Activated CD8-positive, alpha-beta T cell treated with anti-CD3 and anti-CD28 coated beads for 36 hours (primary cell): ENCODE measurements at regions of chr1 and their contacts with region 1.

Region 1: GRCh38 chr1:101506541-101507164 is 269.8 kb downstream of the S1PR1 start:
- DNase-seq: peak; percentile 56
- ATAC-seq: peak; percentile 73
- H3K4me3 Mint-ChIP-seq: no peak overlapping the region
- H3K27ac Mint-ChIP-seq: no peak overlapping the region
- H3K4me1 Mint-ChIP-seq: no peaks in the 10 kb centered on the region
- H3K27me3 Mint-ChIP-seq: no peaks in the 10 kb centered on the region
- CTCF ChIP-seq: peak; percentile 76

Region 2: DNA sequence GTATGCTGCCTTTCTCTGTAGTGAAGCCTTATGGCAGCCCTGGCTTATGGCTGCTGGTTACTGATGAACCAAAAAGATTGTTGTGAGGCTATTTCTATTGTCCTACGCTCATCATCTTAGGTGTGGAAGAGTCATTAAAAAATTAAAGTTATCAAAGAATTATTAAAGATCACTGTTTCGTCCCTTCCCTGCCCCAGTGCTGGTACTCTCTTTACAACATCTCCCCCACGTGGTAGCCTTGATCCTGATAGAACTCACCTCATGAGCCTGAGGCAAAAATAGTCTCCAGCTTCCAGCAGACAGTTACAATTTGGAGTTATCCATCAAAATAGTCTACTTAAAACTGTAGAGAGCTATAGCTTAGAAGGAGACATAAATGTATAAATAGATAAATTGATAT is 68.3 kb before region 1 on chr1:
- CTCF ChIA-PET with region 1: no interaction called
- POLR2A ChIA-PET with region 1: no interaction called
- intact Hi-C with region 1: no loop called
- DNase-seq: no peak
- ATAC-seq: no peak
- H3K4me3 Mint-ChIP-seq: no peak overlapping the region
- H3K27ac Mint-ChIP-seq: no peak overlapping the region
- H3K4me1 Mint-ChIP-seq: peaks cover 11% of the 10 kb centered on the region
- H3K27me3 Mint-ChIP-seq: peaks cover 5% of the 10 kb centered on the region
- CTCF ChIP-seq: peak; percentile 46

Region 3: GRCh38 chr1:101474039-101474665 is 32.5 kb before region 1 on chr1:
- CTCF ChIA-PET with region 1: interaction called, 14 read pairs
- POLR2A ChIA-PET with region 1: no interaction called
- intact Hi-C with region 1: no loop called
- DNase-seq: no peak
- ATAC-seq: no peak
- H3K4me3 Mint-ChIP-seq: no peak overlapping the region
- H3K27ac Mint-ChIP-seq: no peak overlapping the region
- H3K4me1 Mint-ChIP-seq: peaks cover 7% of the 10 kb centered on the region
- H3K27me3 Mint-ChIP-seq: no peaks in the 10 kb centered on the region
- CTCF ChIP-seq: peak; percentile 63

Region 4: DNA sequence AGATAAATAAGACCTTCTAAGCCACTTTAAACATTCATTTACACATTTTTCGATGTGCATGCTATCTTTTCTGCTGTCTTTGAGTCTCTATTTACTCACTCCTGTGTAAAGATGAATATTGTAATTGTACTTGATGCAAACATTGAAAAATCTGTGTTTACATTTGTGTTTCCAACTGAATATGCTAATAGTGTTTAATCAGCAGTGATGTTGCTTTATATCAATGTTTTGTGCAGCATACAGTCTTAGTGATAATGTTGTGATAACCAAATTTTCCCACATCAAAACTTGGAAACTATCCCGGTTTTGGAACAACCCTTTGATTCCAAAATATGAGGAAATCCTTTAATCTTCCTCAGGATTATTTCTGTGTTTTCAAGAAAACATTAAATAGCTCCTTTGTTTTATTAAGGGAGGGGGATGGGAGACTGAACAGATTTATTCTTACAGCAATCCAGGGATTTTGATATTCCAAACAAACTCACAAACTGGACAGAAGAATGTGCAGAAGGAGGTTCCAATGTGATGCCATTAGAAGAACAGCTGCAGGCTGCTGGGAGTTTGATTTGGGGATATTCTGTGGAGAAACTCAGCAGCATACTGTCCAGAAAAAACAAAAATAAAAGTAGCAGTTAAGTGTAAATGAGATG is 21.8 kb before region 1 on chr1:
- CTCF ChIA-PET with region 1: interaction called, 13 read pairs
- POLR2A ChIA-PET with region 1: no interaction called
- intact Hi-C with region 1: no loop called
- DNase-seq: no peak
- ATAC-seq: no peak
- H3K4me3 Mint-ChIP-seq: no peak overlapping the region
- H3K27ac Mint-ChIP-seq: no peak overlapping the region
- H3K4me1 Mint-ChIP-seq: no peaks in the 10 kb centered on the region
- H3K27me3 Mint-ChIP-seq: no peaks in the 10 kb centered on the region
- CTCF ChIP-seq: no peak

Region 5: DNA sequence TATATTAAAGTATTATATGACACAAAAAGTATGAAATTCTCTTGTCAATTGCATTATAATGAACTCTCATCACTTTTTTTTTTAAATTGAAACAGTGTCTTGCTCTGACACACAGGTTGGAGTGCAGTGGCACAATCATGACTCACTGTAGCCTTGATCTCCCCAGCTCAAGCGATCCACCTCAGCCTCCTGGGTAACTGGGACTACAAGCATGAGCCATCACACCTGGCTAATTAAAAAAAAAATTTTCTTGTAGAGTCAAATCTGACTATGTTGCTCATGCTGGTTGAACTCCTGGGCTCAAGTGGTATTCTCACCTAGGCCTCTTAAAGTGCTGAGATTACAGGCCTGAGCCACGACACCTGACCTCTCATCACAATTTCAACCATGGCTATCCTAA is 10.5 kb before region 1 on chr1:
- CTCF ChIA-PET with region 1: interaction called, 10 read pairs
- POLR2A ChIA-PET with region 1: no interaction called
- intact Hi-C with region 1: no loop called
- DNase-seq: peak; percentile 16
- ATAC-seq: peak; percentile 89
- H3K4me3 Mint-ChIP-seq: no peak overlapping the region
- H3K27ac Mint-ChIP-seq: no peak overlapping the region
- H3K4me1 Mint-ChIP-seq: no peaks in the 10 kb centered on the region
- H3K27me3 Mint-ChIP-seq: no peaks in the 10 kb centered on the region
- CTCF ChIP-seq: no peak

Region 6: GRCh38 chr1:101520302-101520701 is 13.6 kb after region 1 on chr1:
- CTCF ChIA-PET with region 1: interaction called, 23 read pairs
- POLR2A ChIA-PET with region 1: no interaction called
- intact Hi-C with region 1: no loop called
- DNase-seq: peak; percentile 23
- ATAC-seq: peak; percentile 64
- H3K4me3 Mint-ChIP-seq: no peak overlapping the region
- H3K27ac Mint-ChIP-seq: no peak overlapping the region
- H3K4me1 Mint-ChIP-seq: peaks cover 5% of the 10 kb centered on the region
- H3K27me3 Mint-ChIP-seq: peaks cover 3% of the 10 kb centered on the region
- CTCF ChIP-seq: peak; percentile 67

Region 7: DNA sequence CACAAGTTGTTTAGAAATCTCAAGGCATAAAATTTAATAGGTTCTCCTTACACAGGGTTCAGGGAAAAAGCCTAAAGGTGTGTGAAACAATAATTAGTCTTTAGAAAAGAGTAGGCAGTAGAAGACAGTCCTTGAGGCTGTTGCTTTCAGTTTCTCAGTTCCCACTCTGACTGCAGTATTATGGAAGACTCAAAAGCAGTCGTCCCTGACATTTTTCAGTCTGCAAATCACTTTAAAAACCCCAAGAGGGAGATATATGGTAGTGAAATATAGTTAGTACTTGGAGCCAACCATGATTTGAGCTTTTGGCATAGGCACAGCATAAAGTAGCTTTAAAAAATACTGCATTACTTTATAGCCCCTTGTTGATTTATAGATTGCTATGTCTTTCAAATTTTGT is 190.4 kb after region 1 on chr1:
- CTCF ChIA-PET with region 1: no interaction called
- POLR2A ChIA-PET with region 1: no interaction called
- intact Hi-C with region 1: no loop called
- DNase-seq: no peak
- ATAC-seq: no peak
- H3K4me3 Mint-ChIP-seq: no peak overlapping the region
- H3K27ac Mint-ChIP-seq: no peak overlapping the region
- H3K4me1 Mint-ChIP-seq: no peaks in the 10 kb centered on the region
- H3K27me3 Mint-ChIP-seq: peaks cover 4% of the 10 kb centered on the region
- CTCF ChIP-seq: no peak